ENCODE measurements at regions of chr4 and their contacts with region 1.

Region 1: GRCh38 chr4:177546745-177547144 is 104.5 kb upstream of the AGA start:
- DNase-seq: no peak
- H3K4me3 Mint-ChIP-seq: no peak overlapping the region
- H3K27ac Mint-ChIP-seq: no peak overlapping the region
- H3K4me1 Mint-ChIP-seq: no peaks in the 10 kb centered on the region
- H3K27me3 Mint-ChIP-seq: no peaks in the 10 kb centered on the region

Region 2: GRCh38 chr4:177367336-177367735 is 179.4 kb before region 1 on chr4:
- CTCF ChIA-PET with region 1: no interaction called
- intact Hi-C with region 1: loop called (anchors 1 kb)
- DNase-seq: peak; percentile 10
- H3K4me3 Mint-ChIP-seq: no peak overlapping the region
- H3K27ac Mint-ChIP-seq: no peak overlapping the region
- H3K4me1 Mint-ChIP-seq: no peaks in the 10 kb centered on the region
- H3K27me3 Mint-ChIP-seq: no peaks in the 10 kb centered on the region

Region 3: DNA sequence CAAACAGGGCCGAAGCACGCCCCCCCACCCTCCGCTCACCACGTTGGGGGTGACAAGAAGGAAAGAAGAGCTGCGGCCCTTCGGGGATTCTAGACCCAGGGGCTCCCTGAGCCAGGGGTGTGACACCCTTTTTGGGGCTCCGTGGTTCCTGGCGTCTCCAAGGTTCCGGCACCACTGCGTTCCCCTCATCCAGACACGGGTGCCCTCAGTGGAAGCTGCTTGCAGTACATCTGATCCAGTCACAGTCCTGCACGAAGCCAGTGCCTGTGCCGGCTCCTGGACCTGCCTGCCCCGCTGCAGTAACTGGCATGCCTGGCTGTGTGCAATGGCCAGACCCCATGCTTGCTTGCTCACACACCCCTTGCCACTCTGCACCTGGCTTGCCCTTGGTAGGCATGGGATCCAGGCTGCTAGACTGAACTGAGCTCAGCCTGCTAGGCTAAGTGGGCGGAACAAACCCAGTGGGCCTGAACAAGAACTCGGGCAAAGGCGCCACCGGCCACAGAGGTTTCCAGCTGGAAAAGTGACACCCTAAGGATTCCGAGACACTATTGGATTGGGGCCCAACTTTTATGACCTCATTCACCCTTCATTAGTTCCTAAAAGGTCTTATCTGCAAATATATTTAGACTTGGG is 315.9 kb after region 1 on chr4:
- CTCF ChIA-PET with region 1: no interaction called
- intact Hi-C with region 1: no loop called
- DNase-seq: no peak
- H3K4me3 Mint-ChIP-seq: no peak overlapping the region
- H3K27ac Mint-ChIP-seq: no peak overlapping the region
- H3K4me1 Mint-ChIP-seq: no peaks in the 10 kb centered on the region
- H3K27me3 Mint-ChIP-seq: no peaks in the 10 kb centered on the region